Activated CD8-positive, alpha-beta T cell treated with anti-CD3 and anti-CD28 coated beads for 36 hours (primary cell): ENCODE measurements at regions of chr18 and their contacts with region 1.

Region 1: GRCh38 chr18:60775978-60776377 is 403.4 kb upstream of the MC4R start:
- DNase-seq: no peak
- ATAC-seq: no peak
- H3K4me3 Mint-ChIP-seq: no peak overlapping the region
- H3K27ac Mint-ChIP-seq: no peak overlapping the region
- H3K4me1 Mint-ChIP-seq: no peaks in the 10 kb centered on the region
- H3K27me3 Mint-ChIP-seq: no peaks in the 10 kb centered on the region
- CTCF ChIP-seq: no peak

Region 2: GRCh38 chr18:60722746-60723145 is 53.2 kb before region 1 on chr18:
- CTCF ChIA-PET with region 1: no interaction called
- POLR2A ChIA-PET with region 1: no interaction called
- intact Hi-C with region 1: loop called (anchors 10 kb)
- DNase-seq: no peak
- ATAC-seq: no peak
- H3K4me3 Mint-ChIP-seq: no peak overlapping the region
- H3K27ac Mint-ChIP-seq: no peak overlapping the region
- H3K4me1 Mint-ChIP-seq: no peaks in the 10 kb centered on the region
- H3K27me3 Mint-ChIP-seq: no peaks in the 10 kb centered on the region
- CTCF ChIP-seq: no peak